ENCODE measurements at regions of chr12 and their contacts with region 1.

Region 1: DNA sequence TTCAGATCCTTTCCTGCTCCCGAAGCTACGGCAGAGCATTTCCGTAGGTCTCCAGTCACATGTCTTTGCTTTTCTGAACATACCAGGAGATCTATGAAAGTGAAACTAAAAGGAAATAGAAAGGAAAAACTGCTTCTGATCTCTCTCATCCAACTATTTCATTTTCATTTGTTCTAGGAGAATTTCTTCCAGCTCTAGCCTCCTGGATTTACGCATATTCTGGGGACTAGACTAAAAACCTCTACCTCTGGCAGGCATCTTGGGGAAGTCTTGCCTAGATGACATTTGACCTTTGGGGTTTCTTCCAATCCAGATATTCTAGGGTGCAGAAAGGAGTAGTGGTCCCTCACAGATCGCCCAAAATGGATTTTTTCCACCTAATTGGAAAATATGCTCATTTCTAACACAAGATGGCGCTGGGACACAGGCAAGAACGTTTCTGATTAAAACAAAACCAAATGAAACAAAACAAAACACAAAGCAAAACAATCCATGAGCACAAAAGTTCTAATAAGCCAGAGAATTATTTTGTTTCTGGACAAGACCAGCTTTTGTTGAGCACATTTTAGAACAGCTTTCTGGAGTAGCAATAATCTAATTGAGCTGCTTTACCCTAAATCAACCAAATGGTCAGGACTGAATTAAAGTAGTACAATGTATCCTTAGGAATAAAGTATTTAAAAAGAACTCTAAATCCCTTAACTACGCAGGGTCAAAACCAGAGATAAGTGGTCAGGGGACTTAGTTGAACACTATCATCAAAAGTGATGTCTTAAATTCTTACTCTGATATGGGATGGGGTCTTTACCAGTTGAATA is 12.3 kb upstream of the PARP11 start:
- DNase-seq: no peak
- H3K4me3 ChIP-seq: peak overlapping the region; percentile 38
- CTCF ChIP-seq: peak; percentile 54

Region 2: GRCh38 chr12:3863756-3864329 is 21.6 kb before region 1 on chr12:
- CTCF ChIA-PET with region 1: interaction called, 10 read pairs
- POLR2A ChIA-PET with region 1: no interaction called
- DNase-seq: no peak
- H3K4me3 ChIP-seq: no peak overlapping the region
- CTCF ChIP-seq: no peak

Region 3: GRCh38 chr12:3872800-3873636 is 12.5 kb before region 1 on chr12 and contains the start of gene PARP11:
- CTCF ChIA-PET with region 1: interaction called, 17 read pairs
- POLR2A ChIA-PET with region 1: interaction called, 5 read pairs
- DNase-seq: peak; percentile 84
- H3K4me3 ChIP-seq: peak within 1 kb of the TSS; percentile 82
- CTCF ChIP-seq: no peak

Region 4: DNA sequence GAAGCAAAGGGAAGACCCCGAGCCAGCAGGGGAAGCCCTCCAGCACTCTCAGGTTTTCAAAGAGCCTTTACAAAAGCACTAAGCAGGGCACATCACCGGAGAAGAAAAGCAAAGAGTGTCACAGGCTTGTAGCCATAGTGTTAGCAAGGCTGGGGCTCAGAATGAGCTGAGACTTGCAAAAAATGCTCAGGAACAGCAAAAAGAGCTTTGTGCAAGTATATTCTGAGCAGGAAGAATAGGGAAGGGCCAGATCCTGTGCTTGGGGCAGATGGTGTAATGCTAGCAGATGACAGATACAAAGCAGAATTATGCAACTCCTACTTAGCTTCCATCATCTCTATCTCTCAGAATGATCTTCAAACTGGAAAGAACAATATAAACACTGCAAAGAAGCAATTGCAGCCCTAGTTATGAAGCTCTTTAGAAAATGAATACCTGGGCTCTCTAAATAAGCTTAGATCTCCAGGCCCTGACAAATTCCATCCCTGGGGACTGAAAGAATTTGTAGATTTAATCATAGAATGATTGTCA is 11.4 kb after region 1 on chr12:
- CTCF ChIA-PET with region 1: interaction called, 35 read pairs
- POLR2A ChIA-PET with region 1: no interaction called
- DNase-seq: no peak
- H3K4me3 ChIP-seq: no peak overlapping the region
- CTCF ChIP-seq: no peak

Region 5: DNA sequence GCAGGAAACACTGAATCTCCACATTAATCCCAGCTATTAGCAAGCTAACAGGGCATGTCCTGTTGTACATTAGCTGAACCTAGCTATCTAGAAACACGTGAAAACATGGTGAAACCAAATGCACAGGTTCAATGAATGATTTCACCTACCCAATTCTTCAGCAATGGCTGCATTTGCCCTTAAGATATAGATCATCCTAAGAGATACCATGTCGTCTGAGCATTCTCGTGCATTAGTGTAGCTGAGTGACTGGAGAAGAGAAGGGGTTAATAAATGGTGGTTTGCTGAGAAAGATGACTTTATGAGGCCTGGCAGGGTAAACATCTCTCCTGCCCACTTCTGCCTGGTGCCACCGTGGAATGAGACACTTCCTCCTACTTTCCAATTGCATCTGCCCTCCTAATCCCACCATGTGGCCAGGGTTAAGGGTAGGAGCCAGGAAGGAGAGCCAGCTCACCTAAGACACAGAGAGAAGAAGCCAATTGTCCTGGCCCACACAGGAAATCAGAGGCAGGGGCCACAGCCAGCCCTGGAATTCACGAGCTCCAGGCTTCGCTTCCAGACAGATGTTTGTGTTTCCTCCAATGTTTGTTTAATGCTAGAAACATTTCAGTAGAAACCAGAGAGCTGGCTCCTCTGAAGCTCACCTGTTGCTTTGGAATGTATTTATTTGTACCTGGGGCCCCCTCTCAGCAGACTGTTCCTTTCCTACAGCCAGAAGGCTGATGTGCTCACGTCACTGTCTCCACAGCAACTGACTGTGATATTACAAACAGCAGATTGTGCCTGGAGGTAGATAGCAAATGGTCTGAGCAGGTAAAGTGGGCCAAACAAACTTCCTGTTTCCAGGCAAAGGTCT is 113.7 kb after region 1 on chr12:
- CTCF ChIA-PET with region 1: interaction called, 11 read pairs
- POLR2A ChIA-PET with region 1: no interaction called
- DNase-seq: no peak
- H3K4me3 ChIP-seq: no peak overlapping the region
- CTCF ChIP-seq: no peak

Region 6: GRCh38 chr12:4037747-4038312 is 152.3 kb after region 1 on chr12:
- CTCF ChIA-PET with region 1: interaction called, 124 read pairs
- POLR2A ChIA-PET with region 1: no interaction called
- DNase-seq: no peak
- H3K4me3 ChIP-seq: no peak overlapping the region
- CTCF ChIP-seq: peak; percentile 46

Measured in AG04449 (cell line).